ENCODE measurements at regions of chr1 and their contacts with region 1.

Region 1: GRCh38 chr1:95520390-95520789 is 286.4 kb downstream of the RWDD3 start:
- DNase-seq: no peak
- H3K4me3 ChIP-seq: no peak overlapping the region
- CTCF ChIP-seq: no peak

Region 2: GRCh38 chr1:95475686-95476457 is 44.5 kb before region 1 on chr1:
- in situ Hi-C with region 1: loop called (anchors 5 kb)
- DNase-seq: no peak
- H3K4me3 ChIP-seq: no peak overlapping the region
- CTCF ChIP-seq: no peak

Region 3: DNA sequence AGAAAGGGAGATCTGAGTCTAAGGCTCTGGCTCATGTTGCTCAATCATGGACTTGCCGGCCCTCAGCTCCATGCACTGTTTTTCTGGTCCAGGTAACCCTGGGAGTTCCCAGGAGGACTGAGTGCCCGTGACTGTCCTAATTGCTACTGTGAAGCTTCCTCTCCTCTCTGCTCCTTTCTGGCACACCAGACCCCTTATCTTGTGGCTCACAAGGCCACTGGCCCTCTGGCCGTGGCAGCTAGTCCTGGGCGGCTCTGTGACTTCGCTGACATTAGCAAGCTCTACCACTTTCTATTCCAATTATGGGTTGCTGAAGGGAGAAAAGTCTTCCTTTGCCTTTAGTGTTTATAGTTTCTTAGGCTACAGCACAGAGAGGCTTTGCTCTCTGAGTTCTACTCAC is 93.8 kb after region 1 on chr1:
- in situ Hi-C with region 1: loop called (anchors 5 kb)
- DNase-seq: no peak
- H3K4me3 ChIP-seq: no peak overlapping the region
- CTCF ChIP-seq: no peak

Measured in astrocyte of the cerebellum (primary cell).